ENCODE measurements at regions of chr7 and their contacts with region 1.

Region 1: DNA sequence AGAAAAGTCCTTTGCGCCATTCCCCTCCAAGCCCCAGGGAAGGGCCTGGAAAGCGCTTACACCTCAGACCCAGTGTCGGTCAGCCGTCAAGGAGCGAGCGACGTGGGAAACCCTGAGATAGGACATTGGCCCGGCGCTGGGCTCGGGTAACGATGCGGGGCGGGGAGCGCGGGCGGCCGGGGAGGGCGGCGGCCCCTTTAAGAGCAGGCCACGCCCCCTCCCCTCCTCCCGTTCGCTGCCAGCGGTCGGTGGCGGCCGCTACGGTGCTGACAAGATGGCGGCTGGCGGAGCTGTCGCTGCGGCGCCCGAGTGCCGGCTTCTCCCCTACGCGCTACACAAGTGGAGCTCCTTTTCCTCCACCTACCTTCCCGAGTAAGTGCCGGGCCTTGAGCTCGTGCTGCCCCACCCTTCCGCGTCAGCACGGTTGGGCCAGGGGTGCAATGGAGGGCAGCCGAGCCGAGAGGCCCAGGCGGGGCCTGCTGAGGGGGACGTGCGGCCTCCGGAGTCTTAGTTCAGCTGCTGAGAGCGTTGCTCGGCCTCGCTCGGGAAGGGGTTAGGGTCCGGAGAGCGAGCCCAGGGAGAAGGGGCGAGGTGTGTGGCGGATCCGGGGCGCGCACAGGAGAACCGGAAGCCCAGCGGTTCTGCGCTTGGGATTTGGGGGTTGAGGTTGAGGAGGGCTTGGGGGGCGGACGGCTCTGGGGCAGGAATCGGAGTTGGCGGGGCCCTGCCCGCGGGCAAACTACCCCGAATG is at the start of gene MKLN1:
- DNase-seq: peak; percentile 93
- ATAC-seq: peak; percentile 99 to 100 (median 99)
- H3K4me3 ChIP-seq: peak within 1 kb of the TSS; percentile 67 to 94 (median 82)
- H3K27ac ChIP-seq: peak within 1 kb of the TSS; percentile 93 to 99 (median 97)
- H3K4me1 ChIP-seq: peaks cover 0 to 50% (median 41%) of the 10 kb centered on the region in 9 donors
- H3K27me3 ChIP-seq: no peaks in the 10 kb centered on the region
- CTCF ChIP-seq: no peak
- total RNA-seq, gene MKLN1: 34.3 to 48.2 (median 44.8) TPM

Region 2: GRCh38 chr7:131424219-131424822 is 96.5 kb after region 1 on chr7:
- intact Hi-C with region 1: loop called in 5 of 10 experiments (anchors 2 to 10 kb)
- DNase-seq: no peak
- ATAC-seq: peak; percentile 48 to 86 (median 64)
- H3K4me3 ChIP-seq: no peak overlapping the region
- H3K27ac ChIP-seq: no peak overlapping the region
- H3K4me1 ChIP-seq: peaks cover 0 to 29% (median 13%) of the 10 kb centered on the region in 9 donors
- H3K27me3 ChIP-seq: no peaks in the 10 kb centered on the region
- CTCF ChIP-seq: peak; percentile 44 to 76 (median 68)

Region 3: DNA sequence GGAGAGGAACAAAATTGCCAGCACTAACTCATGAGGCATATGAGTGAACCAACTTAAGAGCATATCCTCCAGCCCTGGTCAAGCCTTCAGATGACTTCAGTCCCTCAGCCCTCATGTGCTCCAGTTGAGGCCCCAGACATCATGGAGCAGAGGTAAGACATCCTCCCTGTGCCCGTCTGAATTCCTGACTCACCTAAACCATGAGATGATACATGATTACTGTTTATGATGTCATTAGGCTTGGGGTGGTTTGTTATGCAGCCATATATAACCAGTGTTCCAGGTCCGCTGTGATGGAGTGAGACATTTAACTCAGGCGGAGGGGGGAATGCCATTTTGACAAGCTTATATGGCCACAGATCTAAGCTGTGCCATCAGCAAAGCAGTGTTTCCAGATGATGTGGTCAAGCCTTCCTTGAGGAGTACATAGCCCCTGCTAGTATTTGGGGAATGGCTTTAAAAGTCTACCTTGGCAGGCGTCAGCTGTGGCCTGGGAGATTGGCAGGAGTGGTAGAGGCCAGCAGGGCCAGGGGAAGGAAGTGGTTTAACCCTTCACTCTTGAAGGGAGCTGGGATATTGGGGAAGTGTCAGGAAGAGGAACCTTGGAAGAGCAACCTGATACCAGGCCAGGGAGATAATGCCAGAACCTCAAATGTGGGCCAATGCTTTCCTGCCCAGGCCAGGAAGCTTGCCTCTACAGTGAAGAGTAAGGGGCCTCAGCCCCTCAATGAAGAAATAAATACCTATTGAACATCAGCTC is 571.6 kb after region 1 on chr7:
- intact Hi-C with region 1: no loop called
- DNase-seq: no peak
- ATAC-seq: no peak
- H3K4me3 ChIP-seq: no peak overlapping the region
- H3K27ac ChIP-seq: no peak overlapping the region
- H3K4me1 ChIP-seq: no peaks in the 10 kb centered on the region
- H3K27me3 ChIP-seq: peaks cover 0 to 18% (median 11%) of the 10 kb centered on the region in 7 donors
- CTCF ChIP-seq: no peak